ENCODE measurements at regions of chr21 and their contacts with region 1.

Region 1: DNA sequence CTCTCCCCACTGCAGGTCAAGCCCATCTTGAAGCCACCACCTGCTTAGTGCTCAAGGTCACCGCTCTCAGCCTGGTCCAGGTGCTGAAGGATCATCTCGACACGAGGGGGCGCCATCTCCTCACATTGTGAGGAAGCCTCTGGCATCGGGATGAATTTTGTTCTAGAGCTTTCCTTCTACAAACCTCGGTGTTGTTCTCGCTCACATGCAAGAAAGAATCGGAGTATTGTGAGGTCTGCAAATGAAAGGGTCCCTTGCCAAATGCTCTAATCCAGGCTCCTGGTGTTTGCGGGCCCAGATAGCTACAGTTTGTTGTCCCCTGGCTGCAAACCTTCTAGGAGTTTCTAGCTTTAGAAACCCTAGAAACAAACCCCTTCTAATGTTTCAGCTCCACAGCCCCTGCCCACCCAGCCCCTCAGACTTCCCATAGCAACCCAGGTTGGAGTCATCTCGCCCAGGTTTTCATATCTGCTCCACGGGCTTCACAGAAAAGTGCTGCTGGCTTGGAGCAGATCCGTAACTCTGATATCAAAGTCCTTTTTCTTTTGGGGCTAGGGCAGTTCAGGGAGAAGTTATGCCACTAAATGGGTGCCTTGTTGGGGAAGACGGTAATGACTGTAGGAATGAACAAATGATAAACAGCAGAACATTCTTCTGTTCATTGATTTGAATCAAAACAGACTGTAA is 8.6 kb upstream of the ATP5PO start:
- DNase-seq: peak; percentile 72 to 90 (median 80)
- H3K4me3 ChIP-seq: peak overlapping the region; percentile 13
- H3K4me3 Mint-ChIP-seq: peak overlapping the region in 3 of 7 donors; percentile 26 to 61 (median 51)
- H3K27ac ChIP-seq: no peak overlapping the region
- H3K27ac Mint-ChIP-seq: peak overlapping the region; percentile 39 to 86 (median 69)
- H3K4me1 ChIP-seq: peaks cover 12% of the 10 kb centered on the region
- H3K4me1 Mint-ChIP-seq: peaks cover 10 to 15% (median 13%) of the 10 kb centered on the region in 3 donors
- H3K27me3 ChIP-seq: no peaks in the 10 kb centered on the region
- H3K27me3 Mint-ChIP-seq: no peaks in the 10 kb centered on the region

Region 2: GRCh38 chr21:33961061-33961460 is 36.8 kb after region 1 on chr21:
- CTCF ChIA-PET with region 1: interaction called, 10 read pairs
- POLR2A ChIA-PET with region 1: no interaction called
- DNase-seq: no peak
- H3K4me3 ChIP-seq: no peak overlapping the region
- H3K4me3 Mint-ChIP-seq: no peak overlapping the region
- H3K27ac ChIP-seq: no peak overlapping the region
- H3K27ac Mint-ChIP-seq: peak overlapping the region in 1 of 8 donors; percentile 66
- H3K4me1 ChIP-seq: peaks cover 12% of the 10 kb centered on the region
- H3K4me1 Mint-ChIP-seq: peaks cover 29 to 65% (median 58%) of the 10 kb centered on the region in 3 donors
- H3K27me3 ChIP-seq: no peaks in the 10 kb centered on the region
- H3K27me3 Mint-ChIP-seq: no peaks in the 10 kb centered on the region

Region 3: GRCh38 chr21:33976082-33977016 is 52.1 kb after region 1 on chr21:
- CTCF ChIA-PET with region 1: interaction called, 13 read pairs
- POLR2A ChIA-PET with region 1: interaction called, 5 read pairs
- DNase-seq: peak; percentile 16 to 76 (median 44)
- H3K4me3 ChIP-seq: peak overlapping the region; percentile 23
- H3K4me3 Mint-ChIP-seq: peak overlapping the region; percentile 0 to 80 (median 75)
- H3K27ac ChIP-seq: peak overlapping the region; percentile 83
- H3K27ac Mint-ChIP-seq: peak overlapping the region; percentile 88 to 98 (median 93)
- H3K4me1 ChIP-seq: peaks cover 32% of the 10 kb centered on the region
- H3K4me1 Mint-ChIP-seq: peaks cover 49 to 70% (median 58%) of the 10 kb centered on the region in 3 donors
- H3K27me3 ChIP-seq: no peaks in the 10 kb centered on the region
- H3K27me3 Mint-ChIP-seq: no peaks in the 10 kb centered on the region

Region 4: GRCh38 chr21:34202553-34203372 is 278.5 kb after region 1 on chr21:
- CTCF ChIA-PET with region 1: interaction called, 18 read pairs
- POLR2A ChIA-PET with region 1: no interaction called
- DNase-seq: no peak
- H3K4me3 ChIP-seq: peak overlapping the region; percentile 65
- H3K4me3 Mint-ChIP-seq: peak overlapping the region in 6 of 7 donors; percentile 4 to 89 (median 76)
- H3K27ac ChIP-seq: no peak overlapping the region
- H3K27ac Mint-ChIP-seq: peak overlapping the region in 1 of 8 donors; percentile 27
- H3K4me1 ChIP-seq: peaks cover 28% of the 10 kb centered on the region
- H3K4me1 Mint-ChIP-seq: peaks cover 30 to 44% (median 41%) of the 10 kb centered on the region in 3 donors
- H3K27me3 ChIP-seq: no peaks in the 10 kb centered on the region
- H3K27me3 Mint-ChIP-seq: peaks cover 2 to 3% of the 10 kb centered on the region in 2 donors

Region 5: GRCh38 chr21:34351786-34352241 is 427.6 kb after region 1 on chr21:
- CTCF ChIA-PET with region 1: interaction called, 190 read pairs
- POLR2A ChIA-PET with region 1: interaction called, 14 read pairs
- DNase-seq: peak in 1 of 5 donors; percentile 10
- H3K4me3 ChIP-seq: no peak overlapping the region
- H3K4me3 Mint-ChIP-seq: no peak overlapping the region
- H3K27ac ChIP-seq: no peak overlapping the region
- H3K27ac Mint-ChIP-seq: no peak overlapping the region
- H3K4me1 ChIP-seq: no peaks in the 10 kb centered on the region
- H3K4me1 Mint-ChIP-seq: peaks cover 4 to 6% (median 5%) of the 10 kb centered on the region in 3 donors
- H3K27me3 ChIP-seq: no peaks in the 10 kb centered on the region
- H3K27me3 Mint-ChIP-seq: peaks cover 25 to 26% of the 10 kb centered on the region in 2 donors